Aorta (tissue), 5 donors: ENCODE measurements at regions of chr19 and their contacts with region 1.

Region 1: GRCh38 chr19:46850228-46851203 is at the start of gene AP2S1:
- DNase-seq: peak; percentile 96 to 97
- ATAC-seq: peak; percentile 97
- H3K4me3 ChIP-seq: peak within 1 kb of the TSS; percentile 54 to 84
- H3K27ac ChIP-seq: peak within 1 kb of the TSS in 1 of 2 donors; percentile 61
- H3K4me1 ChIP-seq: no peaks in the 10 kb centered on the region
- H3K27me3 ChIP-seq: no peaks in the 10 kb centered on the region
- total RNA-seq, gene AP2S1: 98.3 to 119 TPM

Region 2: DNA sequence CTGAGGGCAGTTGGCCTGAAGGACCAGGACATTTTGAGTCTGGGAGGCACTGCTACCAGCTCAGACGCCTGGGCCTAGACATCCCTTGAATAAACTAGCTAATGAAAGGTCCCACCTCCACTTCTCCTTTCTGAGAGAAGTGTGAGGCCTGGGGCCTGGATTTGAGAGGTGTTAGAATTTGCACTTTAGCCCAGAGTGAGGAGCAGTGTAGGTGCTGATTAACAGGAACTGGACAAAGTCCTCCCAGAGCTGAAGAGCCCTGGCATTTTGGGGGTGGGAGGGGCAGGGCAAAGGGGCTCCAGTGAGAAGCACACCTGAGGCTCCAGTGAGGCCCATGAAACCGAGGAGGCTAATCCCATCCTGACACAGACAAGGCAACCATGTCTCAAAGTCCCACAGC is 47.0 kb before region 1 on chr19:
- intact Hi-C with region 1: no loop called
- DNase-seq: no peak
- ATAC-seq: no peak
- H3K4me3 ChIP-seq: no peak overlapping the region
- H3K27ac ChIP-seq: no peak overlapping the region
- H3K4me1 ChIP-seq: no peaks in the 10 kb centered on the region
- H3K27me3 ChIP-seq: no peaks in the 10 kb centered on the region

Region 3: DNA sequence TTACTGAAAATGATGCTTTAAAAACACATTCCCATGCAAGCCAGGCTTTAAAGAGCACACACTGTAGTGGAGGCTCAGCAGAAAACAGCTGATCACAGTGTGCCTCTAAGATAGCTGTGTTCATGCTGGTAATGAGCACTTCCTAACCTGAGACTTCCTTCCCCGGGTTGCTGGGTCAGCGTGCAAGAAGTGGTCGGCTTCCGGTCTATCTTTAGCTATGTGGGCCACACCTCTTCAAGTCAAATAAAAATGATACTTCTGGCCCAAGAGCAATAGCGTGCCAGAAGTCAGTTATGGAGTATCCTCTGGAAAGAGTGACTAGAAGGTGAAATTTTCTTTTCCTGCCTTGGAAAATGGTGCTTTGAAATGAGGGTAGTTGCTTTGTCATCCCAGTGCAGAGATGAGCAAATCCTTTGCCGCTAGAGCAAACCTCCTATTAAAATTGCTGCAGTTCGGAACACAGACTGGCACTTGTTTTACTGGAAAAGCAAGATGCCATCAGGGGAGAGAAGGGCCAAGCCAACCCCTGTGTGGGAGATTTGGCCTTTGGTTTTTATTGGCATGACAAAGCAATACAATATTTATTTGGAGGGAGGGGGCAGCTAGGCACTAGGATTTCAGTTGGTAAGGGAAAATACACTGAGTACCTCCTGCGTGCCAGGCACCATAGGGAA is 74.5 kb after region 1 on chr19:
- intact Hi-C with region 1: no loop called
- DNase-seq: no peak
- ATAC-seq: peak; percentile 54
- H3K4me3 ChIP-seq: no peak overlapping the region
- H3K27ac ChIP-seq: peak overlapping the region in 1 of 2 donors; percentile 98
- H3K4me1 ChIP-seq: peaks cover 6 to 25% of the 10 kb centered on the region in 2 donors
- H3K27me3 ChIP-seq: no peaks in the 10 kb centered on the region

Region 4: GRCh38 chr19:47112997-47113849 is 262.7 kb after region 1 on chr19 and contains the start of gene ZC3H4:
- intact Hi-C with region 1: loop called in 1 of 2 experiments (anchors 10 kb)
- DNase-seq: peak; percentile 99
- ATAC-seq: peak; percentile 99
- H3K4me3 ChIP-seq: peak within 1 kb of the TSS; percentile 86 to 97
- H3K27ac ChIP-seq: peak within 1 kb of the TSS; percentile 99 to 100
- H3K4me1 ChIP-seq: no peaks in the 10 kb centered on the region
- H3K27me3 ChIP-seq: no peaks in the 10 kb centered on the region
- total RNA-seq, gene ZC3H4: 33.9 to 34.6 TPM

Region 5: DNA sequence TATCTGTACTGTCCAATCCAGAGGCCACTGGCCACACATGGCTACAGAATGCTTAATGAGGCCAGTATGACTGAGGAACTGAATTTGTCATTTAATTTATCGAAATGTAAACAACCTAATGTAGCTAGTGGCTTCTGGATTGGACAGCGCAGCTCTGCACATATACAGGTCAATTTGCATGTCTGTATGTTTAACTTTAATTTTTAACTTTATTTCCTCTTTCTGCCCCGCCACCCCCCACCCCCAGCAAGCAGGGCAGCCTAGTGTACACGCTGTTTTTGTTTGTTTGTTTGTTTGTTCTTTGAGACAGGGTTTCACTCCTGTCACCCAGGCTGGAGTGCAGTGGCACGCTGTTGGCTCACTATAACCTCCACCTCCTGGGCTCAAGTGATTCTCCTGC is 1335.5 kb after region 1 on chr19:
- intact Hi-C with region 1: no loop called
- DNase-seq: no peak
- ATAC-seq: no peak
- H3K4me3 ChIP-seq: no peak overlapping the region
- H3K27ac ChIP-seq: no peak overlapping the region
- H3K4me1 ChIP-seq: no peaks in the 10 kb centered on the region
- H3K27me3 ChIP-seq: no peaks in the 10 kb centered on the region